ENCODE measurements at regions of chr7 and their contacts with region 1.

Region 1: DNA sequence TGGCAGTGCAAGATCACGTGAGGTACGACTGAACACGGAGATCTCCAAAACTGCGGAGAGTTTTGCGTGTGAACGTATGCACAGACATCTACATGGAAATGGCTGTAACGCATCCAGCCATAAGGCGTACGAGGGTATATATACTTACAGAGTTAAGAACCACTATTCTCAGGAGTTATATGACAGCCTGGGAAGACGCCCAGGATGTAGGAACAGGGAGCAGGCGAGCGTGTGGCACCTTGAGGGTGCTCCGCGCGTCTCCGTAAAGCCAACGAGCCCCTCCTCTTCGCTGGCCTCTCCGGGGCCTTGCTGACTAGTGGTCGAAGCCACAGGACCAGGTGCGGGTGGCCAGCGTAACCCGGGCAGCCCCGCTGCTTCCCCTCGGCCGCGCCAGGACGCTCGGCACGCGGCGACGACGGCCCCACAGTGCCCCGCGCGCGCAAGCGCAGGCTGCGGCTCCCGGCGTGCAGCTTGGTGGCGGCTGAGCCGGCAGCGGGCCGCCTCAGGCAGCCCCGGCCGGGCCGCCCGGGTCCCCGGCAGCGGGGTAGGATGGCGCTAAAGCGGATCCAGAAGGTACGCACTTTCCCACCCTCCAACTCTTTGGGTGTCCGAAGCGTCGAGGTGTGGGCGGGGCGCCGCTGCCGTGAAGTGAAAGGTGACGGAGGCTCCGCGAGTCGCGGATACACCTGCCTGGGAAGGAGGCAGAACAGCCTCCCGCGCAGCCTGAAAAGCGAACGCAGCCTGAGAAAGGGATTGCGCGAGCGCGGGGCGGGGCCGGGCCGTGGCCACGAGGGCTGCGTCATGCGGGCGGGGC is at the start of gene UBE2D4:
- DNase-seq: peak; percentile 75 to 94 (median 89)
- H3K4me3 ChIP-seq: peak within 1 kb of the TSS; percentile 64 to 99 (median 85)
- H3K27ac ChIP-seq: peak within 1 kb of the TSS; percentile 52 to 98 (median 94)
- H3K27me3 ChIP-seq: no peaks in the 10 kb centered on the region
- CTCF ChIP-seq: peak in 13 of 56 donors; percentile 7 to 48 (median 19)
- total RNA-seq, gene UBE2D4: 20.4 to 46.7 (median 34.6) TPM

Region 2: DNA sequence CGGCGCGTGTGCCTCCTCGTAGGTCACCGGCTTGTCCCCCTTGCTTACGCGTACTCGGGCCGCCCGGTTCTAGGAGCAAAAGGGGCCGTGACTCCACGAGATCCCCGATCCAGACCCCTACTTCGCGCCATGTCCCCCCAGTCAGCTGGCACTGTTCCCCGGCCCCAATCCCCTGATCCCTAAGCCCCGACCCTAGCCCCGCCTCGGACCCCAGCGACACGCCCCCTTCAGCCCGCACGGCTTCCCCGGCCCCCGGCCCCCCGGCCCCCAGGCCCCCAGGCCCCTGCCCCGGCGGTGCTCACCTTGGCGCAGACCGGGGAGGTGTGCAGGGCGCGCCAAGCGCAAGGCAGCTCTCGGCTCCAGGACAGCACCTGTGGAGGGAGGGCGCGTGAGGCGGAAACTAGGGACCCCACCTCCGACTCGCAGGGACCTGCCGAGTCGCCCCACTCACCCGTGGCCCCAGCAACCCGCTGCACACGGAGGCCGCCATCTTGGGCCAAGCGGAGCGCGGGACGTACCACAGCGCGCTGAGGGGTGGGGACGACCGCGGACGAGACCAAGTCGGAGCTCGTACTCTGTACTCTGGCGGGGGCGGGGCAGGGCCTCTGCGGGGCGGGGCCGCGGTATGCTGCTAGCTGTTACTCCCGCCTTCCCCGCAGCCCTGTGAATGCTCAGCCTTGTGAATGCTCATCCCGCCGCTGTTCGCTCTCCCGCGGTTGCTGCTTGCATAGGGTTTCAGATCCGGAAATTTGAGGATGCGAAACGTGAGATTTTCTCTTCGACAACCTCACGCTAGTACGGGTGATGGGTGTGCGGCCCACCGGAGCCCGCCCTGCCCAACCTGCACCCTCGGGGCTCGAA is 57.0 kb before region 1 on chr7 and contains the start of gene MRPS24:
- intact Hi-C with region 1: loop called in 1 of 2 experiments (anchors 5 kb)
- DNase-seq: peak; percentile 92 to 96 (median 95)
- H3K4me3 ChIP-seq: peak within 1 kb of the TSS; percentile 50 to 88 (median 77)
- H3K27ac ChIP-seq: peak within 1 kb of the TSS; percentile 73 to 99 (median 93)
- H3K27me3 ChIP-seq: no peaks in the 10 kb centered on the region
- CTCF ChIP-seq: peak in 23 of 56 donors; percentile 5 to 53 (median 23)
- total RNA-seq, gene MRPS24: 39.5 to 106 (median 68.7) TPM

Region 3: GRCh38 chr7:43906331-43907010 is 19.7 kb before region 1 on chr7 and contains the start of gene URGCP:
- intact Hi-C with region 1: loop called (anchors 1 to 2 kb)
- DNase-seq: peak in 5 of 10 donors; percentile 34 to 74 (median 57)
- H3K4me3 ChIP-seq: peak within 1 kb of the TSS; percentile 57 to 92 (median 78)
- H3K27ac ChIP-seq: peak within 1 kb of the TSS; percentile 1 to 94 (median 86)
- H3K27me3 ChIP-seq: no peaks in the 10 kb centered on the region
- CTCF ChIP-seq: peak in 1 of 56 donors; percentile 10
- total RNA-seq, gene URGCP: 38.6 to 96.9 (median 70.0) TPM

Region 4: GRCh38 chr7:44622307-44623151 is 696.3 kb after region 1 on chr7:
- intact Hi-C with region 1: no loop called
- DNase-seq: no peak
- H3K4me3 ChIP-seq: no peak overlapping the region
- H3K27ac ChIP-seq: peak overlapping the region in 4 of 59 donors; percentile 5 to 40 (median 20)
- H3K27me3 ChIP-seq: no peaks in the 10 kb centered on the region
- CTCF ChIP-seq: no peak

Measured in dorsolateral prefrontal cortex (tissue), 120 donors.